Panc1 (cell line): ENCODE measurements at regions of chr14 and their contacts with region 1.

Region 1: DNA sequence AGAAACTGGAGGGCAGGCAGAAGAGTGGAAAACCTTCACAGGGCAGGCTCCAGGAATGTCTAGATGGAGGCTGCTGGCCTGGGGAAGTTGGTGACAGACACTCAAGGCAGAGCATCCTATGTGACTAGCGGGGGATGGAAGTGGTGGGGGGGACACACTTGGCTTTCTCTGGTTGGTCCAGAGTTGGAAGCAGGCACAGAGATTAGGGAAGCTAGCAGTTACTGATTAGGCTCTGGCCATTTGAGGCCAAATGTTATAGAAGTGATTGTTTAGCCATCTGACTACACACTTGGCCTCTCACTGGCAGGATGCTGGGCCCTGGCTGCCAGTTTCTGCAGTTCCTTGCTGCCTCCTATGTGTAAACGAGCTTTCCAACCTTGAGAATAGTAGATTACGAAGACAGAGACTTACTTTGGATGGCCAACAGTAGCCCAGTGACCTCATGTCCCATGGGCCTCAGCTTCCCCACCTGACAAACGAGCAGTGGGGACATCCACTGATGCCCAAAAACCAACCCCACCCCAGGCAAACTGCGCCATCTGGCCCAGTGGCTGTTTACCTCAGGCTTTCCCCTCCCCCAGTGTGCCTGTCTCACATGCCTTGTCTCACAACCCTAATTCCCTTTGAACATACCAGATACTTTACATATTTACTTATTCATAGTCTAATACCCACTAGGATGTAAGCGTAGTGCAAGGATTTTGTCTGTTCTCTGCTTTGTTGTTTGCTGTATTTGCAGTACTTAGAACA is 102.7 kb downstream of the PAPLN start:
- DNase-seq: no peak
- ATAC-seq: no peak
- H3K4me3 ChIP-seq: no peak overlapping the region
- H3K27ac ChIP-seq: no peak overlapping the region
- H3K4me1 ChIP-seq: no peaks in the 10 kb centered on the region
- H3K27me3 ChIP-seq: no peaks in the 10 kb centered on the region
- CTCF ChIP-seq: no peak

Region 2: GRCh38 chr14:73223049-73223448 is 117.0 kb before region 1 on chr14:
- CTCF ChIA-PET with region 1: no interaction called
- POLR2A ChIA-PET with region 1: interaction called, 16 read pairs
- in situ Hi-C with region 1: no loop called
- intact Hi-C with region 1: no loop called
- DNase-seq: no peak
- ATAC-seq: no peak
- H3K4me3 ChIP-seq: no peak overlapping the region
- H3K27ac ChIP-seq: peak overlapping the region; percentile 29; the same call in 1 of the 2 replicates
- H3K4me1 ChIP-seq: peaks cover 11% of the 10 kb centered on the region
- H3K27me3 ChIP-seq: no peaks in the 10 kb centered on the region
- CTCF ChIP-seq: no peak

Region 3: GRCh38 chr14:73365727-73366126 is 25.7 kb after region 1 on chr14:
- CTCF ChIA-PET with region 1: no interaction called
- POLR2A ChIA-PET with region 1: no interaction called
- in situ Hi-C with region 1: no loop called
- intact Hi-C with region 1: no loop called
- DNase-seq: no peak
- ATAC-seq: no peak
- H3K4me3 ChIP-seq: no peak overlapping the region
- H3K27ac ChIP-seq: no peak overlapping the region
- H3K4me1 ChIP-seq: no peaks in the 10 kb centered on the region
- H3K27me3 ChIP-seq: no peaks in the 10 kb centered on the region
- CTCF ChIP-seq: no peak

Region 4: GRCh38 chr14:73675037-73675436 is 335.0 kb after region 1 on chr14:
- CTCF ChIA-PET with region 1: no interaction called
- POLR2A ChIA-PET with region 1: interaction called, 15 read pairs
- in situ Hi-C with region 1: no loop called
- intact Hi-C with region 1: no loop called
- DNase-seq: no peak
- ATAC-seq: no peak
- H3K4me3 ChIP-seq: no peak overlapping the region
- H3K27ac ChIP-seq: no peak overlapping the region
- H3K4me1 ChIP-seq: no peaks in the 10 kb centered on the region
- H3K27me3 ChIP-seq: no peaks in the 10 kb centered on the region
- CTCF ChIP-seq: no peak

Region 5: GRCh38 chr14:74493343-74494261 is 1153.6 kb after region 1 on chr14 and contains the start of gene ISCA2:
- CTCF ChIA-PET with region 1: no interaction called
- POLR2A ChIA-PET with region 1: interaction called, 13 read pairs
- in situ Hi-C with region 1: no loop called
- intact Hi-C with region 1: no loop called
- DNase-seq: peak; percentile 82
- ATAC-seq: peak; percentile 96
- H3K4me3 ChIP-seq: peak within 1 kb of the TSS; percentile 87 to 91
- H3K27ac ChIP-seq: peak within 1 kb of the TSS; percentile 85
- H3K4me1 ChIP-seq: peaks cover 9% of the 10 kb centered on the region
- H3K27me3 ChIP-seq: no peaks in the 10 kb centered on the region
- CTCF ChIP-seq: no peak
- total RNA-seq, gene ISCA2: 26.1 TPM